Left ventricle myocardium superior (tissue), 1 donor: ENCODE measurements at regions of chr15 and their contacts with region 1.

Region 1: DNA sequence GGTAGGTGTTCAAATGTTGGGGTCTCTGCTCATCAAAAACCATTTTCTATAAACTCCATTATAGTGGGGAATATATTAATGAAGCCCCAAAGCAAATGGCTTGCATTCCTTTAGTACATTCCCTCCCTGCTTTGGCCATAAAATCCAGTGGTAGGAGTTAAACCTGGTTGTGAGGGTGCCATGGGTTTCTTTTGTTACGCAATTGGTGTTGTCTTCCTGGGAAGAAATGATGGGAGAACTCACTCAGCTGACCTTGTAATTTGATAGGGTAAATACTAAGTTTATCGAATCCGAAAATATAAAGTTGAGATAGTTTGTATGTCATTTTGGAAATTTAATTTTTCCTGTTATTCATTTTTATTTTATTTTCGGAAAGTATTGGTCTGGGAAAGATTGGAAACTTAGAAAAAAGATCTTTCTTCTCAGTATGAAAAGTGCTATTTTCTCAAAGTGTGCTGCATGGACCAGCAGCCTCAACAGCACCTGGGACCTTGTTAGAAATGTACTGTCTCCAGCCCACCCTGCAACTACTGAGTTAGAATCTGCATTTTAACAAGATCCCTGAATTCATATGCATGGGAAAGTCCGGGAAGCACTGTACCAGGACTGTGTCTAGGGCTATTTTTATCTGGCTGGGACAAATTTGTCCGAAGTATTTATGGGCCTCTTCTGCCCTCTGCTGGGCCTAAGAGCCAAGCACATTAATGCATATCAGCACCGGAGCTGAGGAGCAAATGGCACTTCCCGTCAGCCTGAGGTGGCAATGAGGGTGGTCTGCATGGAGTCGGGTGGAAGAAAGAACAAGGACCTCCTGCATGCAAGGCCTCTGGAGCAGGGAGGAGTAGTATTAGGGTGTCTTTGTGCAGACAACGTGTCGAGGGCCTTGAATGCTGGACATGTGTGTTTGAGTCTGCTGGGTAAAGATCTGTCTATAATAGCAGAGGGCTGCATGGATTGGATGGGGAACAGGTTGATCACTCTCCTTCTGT is 54.7 kb downstream of the FAM81A start:
- DNase-seq: peak; percentile 69
- ATAC-seq: peak; percentile 93

Region 2: DNA sequence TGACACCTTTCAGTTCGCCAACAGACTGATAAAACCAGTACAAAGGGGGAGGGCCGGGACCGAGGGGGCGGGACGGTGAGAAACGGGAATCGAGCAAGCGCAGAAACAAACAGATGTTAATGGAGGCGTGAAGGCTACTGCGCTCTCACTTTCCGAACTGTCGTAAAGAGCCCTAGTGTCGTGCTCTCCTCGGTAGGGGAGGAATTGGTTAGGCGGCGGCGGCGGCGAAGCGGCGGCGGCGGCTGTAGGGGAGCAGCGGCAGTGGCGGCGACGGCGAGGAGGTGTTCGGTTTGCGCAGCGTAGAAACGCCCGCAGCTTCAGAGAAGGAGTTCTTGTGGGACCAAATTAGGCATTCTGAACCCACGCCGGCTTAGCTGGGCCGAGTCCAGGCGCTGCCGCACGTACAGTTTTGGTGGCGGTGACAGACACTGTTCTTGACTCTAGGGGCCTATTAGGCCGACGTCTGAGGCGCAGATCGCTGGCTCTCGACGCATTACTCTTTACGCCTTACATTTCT is 505.1 kb before region 1 on chr15 and contains the start of gene RNF111:
- intact Hi-C with region 1: loop called (anchors 10 kb)
- DNase-seq: peak; percentile 88
- ATAC-seq: peak; percentile 98
- total RNA-seq, gene RNF111: 23.1 TPM

Region 3: GRCh38 chr15:59174835-59175831 is 317.6 kb before region 1 on chr15:
- intact Hi-C with region 1: loop called (anchors 10 kb)
- DNase-seq: peak; percentile 49
- ATAC-seq: peak; percentile 92

Region 4: GRCh38 chr15:59339252-59339672 is 153.4 kb before region 1 on chr15:
- intact Hi-C with region 1: no loop called
- DNase-seq: no peak
- ATAC-seq: peak; percentile 23